Heart right ventricle (tissue), 16 donors: ENCODE measurements at regions of chr9 and their contacts with region 1.

Region 1: DNA sequence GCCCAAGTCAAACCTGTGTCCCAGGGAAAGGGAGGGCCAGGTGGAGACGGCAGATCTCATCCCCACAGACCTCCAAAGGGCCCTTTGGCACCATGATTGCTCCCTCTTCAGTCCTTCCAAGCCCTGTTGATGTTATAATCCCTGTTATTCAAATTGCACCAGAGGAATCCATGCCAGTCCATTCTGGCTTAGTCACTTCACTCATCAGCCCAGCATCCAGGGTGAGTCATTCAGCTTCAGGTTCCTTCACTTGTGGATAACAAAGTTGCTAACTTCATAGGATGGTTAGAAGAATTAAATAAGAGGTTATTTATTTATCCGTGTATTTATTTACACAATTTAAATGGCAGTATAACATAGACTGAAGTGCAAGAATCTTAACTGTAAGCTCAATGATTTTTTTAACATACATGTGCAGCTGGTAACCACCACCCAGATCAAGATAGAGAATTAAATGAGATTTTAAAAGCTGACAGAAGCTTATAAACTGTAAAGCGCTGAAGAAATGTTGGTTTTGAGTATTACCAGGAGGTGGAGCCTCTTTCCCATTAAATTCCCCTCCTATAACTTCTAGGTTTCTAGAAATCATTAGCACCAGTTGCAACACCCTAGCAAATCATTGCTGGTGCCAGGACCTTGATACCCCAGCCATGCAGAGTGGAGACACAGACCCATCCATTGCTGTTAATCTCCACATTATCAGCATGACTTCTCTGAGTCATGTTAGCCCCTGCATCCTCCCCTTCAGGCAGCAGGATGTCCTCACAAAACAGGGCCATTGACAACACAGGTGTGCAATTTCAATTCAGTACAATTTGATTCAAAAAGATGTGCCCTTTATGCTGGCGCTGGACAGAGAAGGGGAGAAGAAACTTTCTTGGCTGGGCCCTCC is 77.4 kb downstream of the SEC61B start:
- DNase-seq: no peak
- ATAC-seq: peak in 2 of 8 donors; percentile 15 to 48
- H3K4me3 ChIP-seq: no peak overlapping the region
- H3K27ac ChIP-seq: no peak overlapping the region
- H3K4me1 ChIP-seq: peaks cover 0 to 10% (median 0%) of the 10 kb centered on the region in 9 donors
- H3K27me3 ChIP-seq: peaks cover 0 to 5% (median 0%) of the 10 kb centered on the region in 7 donors
- CTCF ChIP-seq: peak in 7 of 9 donors; percentile 24 to 50 (median 46)

Region 2: GRCh38 chr9:99509900-99510535 is 210.6 kb after region 1 on chr9:
- intact Hi-C with region 1: no loop called
- DNase-seq: no peak
- ATAC-seq: no peak
- H3K4me3 ChIP-seq: no peak overlapping the region
- H3K27ac ChIP-seq: no peak overlapping the region
- H3K4me1 ChIP-seq: peaks cover 0 to 12% (median 0%) of the 10 kb centered on the region in 9 donors
- H3K27me3 ChIP-seq: no peaks in the 10 kb centered on the region
- CTCF ChIP-seq: no peak

Region 3: GRCh38 chr9:99999797-100000196 is 700.3 kb after region 1 on chr9:
- intact Hi-C with region 1: loop called in 1 of 10 experiments (anchors 10 kb)
- DNase-seq: no peak
- ATAC-seq: no peak
- H3K4me3 ChIP-seq: no peak overlapping the region
- H3K27ac ChIP-seq: no peak overlapping the region
- H3K4me1 ChIP-seq: no peaks in the 10 kb centered on the region
- H3K27me3 ChIP-seq: no peaks in the 10 kb centered on the region
- CTCF ChIP-seq: no peak